Activated CD4-positive, alpha-beta T cell treated with anti-CD3 and anti-CD28 coated beads for 36 hours (primary cell): ENCODE measurements at regions of chr20 and their contacts with region 1.

Region 1: GRCh38 chr20:17938871-17939619 is 29.5 kb downstream of the SNX5 start:
- DNase-seq: peak; percentile 76
- ATAC-seq: peak; percentile 83
- H3K4me3 Mint-ChIP-seq: no peak overlapping the region
- H3K27ac Mint-ChIP-seq: no peak overlapping the region
- H3K4me1 Mint-ChIP-seq: peaks cover 14% of the 10 kb centered on the region
- H3K27me3 Mint-ChIP-seq: no peaks in the 10 kb centered on the region

Region 2: GRCh38 chr20:17898548-17898994 is 40.5 kb before region 1 on chr20:
- CTCF ChIA-PET with region 1: interaction called, 4 read pairs
- POLR2A ChIA-PET with region 1: no interaction called
- intact Hi-C with region 1: loop called in 1 of 2 experiments (anchors 1 kb)
- DNase-seq: peak; percentile 80
- ATAC-seq: peak; percentile 47
- H3K4me3 Mint-ChIP-seq: no peak overlapping the region
- H3K27ac Mint-ChIP-seq: no peak overlapping the region
- H3K4me1 Mint-ChIP-seq: peaks cover 17% of the 10 kb centered on the region
- H3K27me3 Mint-ChIP-seq: peaks cover 27% of the 10 kb centered on the region

Region 3: GRCh38 chr20:18032977-18033892 is 94.2 kb after region 1 on chr20:
- CTCF ChIA-PET with region 1: no interaction called
- POLR2A ChIA-PET with region 1: no interaction called
- intact Hi-C with region 1: no loop called
- DNase-seq: no peak
- ATAC-seq: no peak
- H3K4me3 Mint-ChIP-seq: no peak overlapping the region
- H3K27ac Mint-ChIP-seq: no peak overlapping the region
- H3K4me1 Mint-ChIP-seq: no peaks in the 10 kb centered on the region
- H3K27me3 Mint-ChIP-seq: peaks cover 5% of the 10 kb centered on the region

Region 4: DNA sequence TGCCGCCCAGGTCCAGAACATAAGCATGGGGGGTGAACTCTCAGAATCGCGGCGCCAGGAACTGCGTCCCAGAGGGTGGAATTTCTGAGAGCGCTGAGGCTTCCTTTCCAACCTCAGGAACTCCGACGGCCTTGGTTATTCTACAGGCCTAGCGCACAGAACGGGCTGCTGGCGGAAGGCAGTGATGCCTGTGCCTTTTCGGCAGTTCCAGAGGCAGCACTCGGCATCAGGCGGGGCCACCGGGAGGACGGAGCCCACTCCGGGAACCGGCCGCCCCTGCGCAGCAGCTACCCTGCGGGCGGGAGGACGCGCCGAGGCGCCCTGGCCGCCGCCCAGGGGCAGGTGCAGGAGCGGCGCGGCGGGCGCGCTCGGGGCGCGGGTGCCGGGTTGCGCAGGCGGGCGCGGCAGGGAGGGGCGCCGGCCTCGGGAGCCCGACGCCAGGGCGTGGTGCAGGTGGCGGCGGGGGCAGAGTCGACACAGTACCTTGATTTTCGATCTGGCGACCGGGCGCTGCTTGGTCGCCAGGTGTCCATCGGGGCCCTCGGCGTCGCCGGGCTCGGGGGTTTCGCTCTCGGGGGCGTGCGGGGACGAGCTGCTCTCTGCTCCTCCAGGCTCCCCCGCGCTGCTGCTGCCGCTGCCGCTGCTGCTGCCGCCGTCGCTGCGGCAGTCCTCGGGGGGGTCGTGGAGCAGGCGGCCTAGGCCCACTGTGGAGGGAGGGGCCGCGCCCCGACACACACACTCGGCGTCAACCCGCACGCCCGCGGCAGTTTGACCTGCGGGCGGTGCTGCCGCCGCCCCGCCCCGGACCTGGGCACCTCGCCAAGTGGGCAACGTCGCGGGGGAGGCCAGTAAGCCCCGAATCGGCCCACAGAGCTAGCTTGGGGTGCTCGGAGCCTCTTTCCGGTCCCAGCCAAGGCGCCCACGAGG is 117.4 kb after region 1 on chr20:
- CTCF ChIA-PET with region 1: no interaction called
- POLR2A ChIA-PET with region 1: no interaction called
- intact Hi-C with region 1: no loop called
- DNase-seq: peak; percentile 28
- ATAC-seq: peak; percentile 80
- H3K4me3 Mint-ChIP-seq: peak overlapping the region; percentile 44
- H3K27ac Mint-ChIP-seq: no peak overlapping the region
- H3K4me1 Mint-ChIP-seq: peaks cover 8% of the 10 kb centered on the region
- H3K27me3 Mint-ChIP-seq: peaks cover 54% of the 10 kb centered on the region